CD14-positive monocyte (primary cell): ENCODE measurements at regions of chr4 and their contacts with region 1.

Region 1: GRCh38 chr4:184355111-184355604 is 119.2 kb downstream of the IRF2 start:
- DNase-seq: peak; percentile 94 to 99 (median 97)
- H3K4me3 ChIP-seq: peak overlapping the region in 1 of 3 experiments; percentile 52
- H3K4me3 Mint-ChIP-seq: peak overlapping the region in 1 of 2 donors; percentile 26
- H3K27ac ChIP-seq: peak overlapping the region; percentile 91 to 94
- H3K27ac Mint-ChIP-seq: peak overlapping the region; percentile 88 to 96 (median 94)
- H3K4me1 ChIP-seq: peaks cover 44 to 50% of the 10 kb centered on the region in 2 donors
- H3K4me1 Mint-ChIP-seq: peaks cover 55% of the 10 kb centered on the region
- H3K27me3 ChIP-seq: no peaks in the 10 kb centered on the region
- H3K27me3 Mint-ChIP-seq: no peaks in the 10 kb centered on the region
- CTCF ChIP-seq: no peak

Region 2: DNA sequence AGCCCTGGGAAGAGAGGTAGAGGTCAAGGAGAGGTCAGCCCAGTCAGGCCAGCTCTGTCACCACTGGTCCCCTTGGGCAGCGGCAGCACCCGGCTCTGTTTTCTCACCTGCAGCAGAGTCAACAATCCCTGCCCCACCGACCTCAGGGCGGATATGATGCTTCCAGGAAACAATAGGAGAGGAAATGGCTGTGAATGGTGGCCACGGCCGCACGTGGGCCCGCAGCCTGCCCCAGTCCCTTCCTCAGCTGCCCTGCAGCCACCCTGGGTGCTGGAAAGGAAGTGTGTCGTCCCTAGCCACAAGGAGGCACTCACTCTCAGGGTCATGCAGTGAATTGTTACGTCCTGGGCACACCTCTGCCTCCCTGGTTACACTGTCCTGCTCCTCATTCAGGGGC is 45.0 kb before region 1 on chr4:
- intact Hi-C with region 1: loop called in 1 of 2 experiments (anchors 5 kb)
- DNase-seq: peak; percentile 53 to 73 (median 59)
- H3K4me3 ChIP-seq: no peak overlapping the region
- H3K4me3 Mint-ChIP-seq: no peak overlapping the region
- H3K27ac ChIP-seq: peak overlapping the region in 1 of 2 donors; percentile 2
- H3K27ac Mint-ChIP-seq: peak overlapping the region in 1 of 7 donors; percentile 67
- H3K4me1 ChIP-seq: peaks cover 34 to 36% of the 10 kb centered on the region in 2 donors
- H3K4me1 Mint-ChIP-seq: peaks cover 42% of the 10 kb centered on the region
- H3K27me3 ChIP-seq: no peaks in the 10 kb centered on the region
- H3K27me3 Mint-ChIP-seq: peaks cover 0 to 4% (median 0%) of the 10 kb centered on the region in 3 donors
- CTCF ChIP-seq: peak; percentile 61

Region 3: GRCh38 chr4:184437565-184438265 is 82.6 kb after region 1 on chr4:
- intact Hi-C with region 1: no loop called
- DNase-seq: peak in 2 of 3 donors; percentile 44 to 45
- H3K4me3 ChIP-seq: peak overlapping the region in 1 of 3 experiments; percentile 11
- H3K4me3 Mint-ChIP-seq: peak overlapping the region; percentile 31 to 44
- H3K27ac ChIP-seq: peak overlapping the region in 1 of 2 donors; percentile 50
- H3K27ac Mint-ChIP-seq: peak overlapping the region; percentile 55 to 88 (median 81)
- H3K4me1 ChIP-seq: peaks cover 30 to 32% of the 10 kb centered on the region in 2 donors
- H3K4me1 Mint-ChIP-seq: peaks cover 54% of the 10 kb centered on the region
- H3K27me3 ChIP-seq: no peaks in the 10 kb centered on the region
- H3K27me3 Mint-ChIP-seq: no peaks in the 10 kb centered on the region
- CTCF ChIP-seq: no peak